HEK293T (cell line): ENCODE measurements at regions of chr16 and their contacts with region 1.

Region 1: GRCh38 chr16:30813821-30814189 is 26.8 kb upstream of the ZNF629 start:
- DNase-seq: no peak

Region 2: DNA sequence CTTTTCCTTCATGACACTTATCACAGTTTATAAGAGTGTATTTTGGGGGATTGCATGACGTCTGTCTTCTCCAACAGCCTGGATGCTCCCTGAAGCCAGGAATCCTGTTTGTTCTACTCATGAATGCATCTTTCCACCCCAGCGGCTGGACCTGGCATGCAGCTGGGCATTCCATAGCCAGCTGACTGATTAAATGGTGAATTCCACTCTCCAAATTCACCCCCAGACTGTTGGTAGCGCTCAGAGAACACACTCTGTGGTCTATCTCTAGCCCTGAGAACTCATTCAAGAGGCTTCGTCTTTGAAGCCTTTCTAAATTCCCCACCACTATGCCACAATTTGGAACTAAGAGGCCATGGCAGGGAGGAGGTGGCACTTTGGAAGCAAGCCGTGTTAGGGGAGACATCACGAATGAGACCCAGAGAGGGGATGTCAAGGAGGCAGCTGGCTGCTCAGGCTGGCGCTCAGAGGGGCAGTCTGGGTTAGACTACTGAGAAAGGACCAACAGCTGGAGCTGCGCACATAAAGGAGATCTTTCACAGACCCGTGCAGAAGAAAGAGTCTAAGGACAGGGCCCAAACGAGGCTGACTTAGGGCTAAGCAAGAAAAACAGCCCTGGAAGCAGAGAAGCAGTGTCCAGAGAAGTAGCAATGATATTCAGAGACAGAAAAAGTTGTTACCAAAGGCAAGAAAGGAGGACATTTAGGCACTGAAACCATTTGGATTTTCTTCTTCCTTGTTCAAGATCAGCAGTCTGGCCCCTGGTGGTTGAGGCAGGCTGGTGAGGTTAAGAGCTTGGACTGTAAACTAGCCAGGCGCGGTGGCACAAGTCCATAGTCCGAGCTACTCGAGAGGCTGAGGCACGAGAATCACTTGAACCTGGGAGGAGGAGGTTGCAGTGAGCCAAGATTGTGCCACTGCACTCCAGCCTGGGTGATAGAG is 15.6 kb after region 1 on chr16:
- CTCF ChIA-PET with region 1: interaction called, 10 read pairs
- POLR2A ChIA-PET with region 1: no interaction called
- DNase-seq: no peak

Region 3: GRCh38 chr16:30884760-30885159 is 71.0 kb after region 1 on chr16:
- CTCF ChIA-PET with region 1: no interaction called
- POLR2A ChIA-PET with region 1: no interaction called
- DNase-seq: no peak